HEK293 (cell line): ENCODE measurements at regions of chr7 and their contacts with region 1.

Region 1: DNA sequence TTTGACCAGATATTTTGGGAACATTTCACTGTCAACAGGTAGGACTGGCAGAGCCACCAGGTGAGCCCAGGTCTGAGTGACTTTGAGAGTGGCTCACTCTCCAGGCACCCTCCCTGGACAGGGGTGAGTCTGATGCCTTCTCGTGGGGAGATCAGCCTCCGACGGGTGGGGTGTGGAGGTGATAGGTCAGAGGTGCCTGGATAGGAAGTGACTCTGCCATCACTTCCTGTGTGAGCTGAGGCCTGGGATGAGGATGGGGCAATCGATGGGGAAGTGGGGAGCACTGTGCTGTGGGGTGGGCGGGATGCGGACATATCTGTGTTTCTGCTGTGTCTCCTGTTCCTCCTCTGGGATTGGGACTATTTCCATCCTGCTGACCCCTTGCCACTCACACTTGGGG is 34.6 kb downstream of the IFT22 start:
- H3K4me3 ChIP-seq: no peak overlapping the region
- H3K27ac ChIP-seq: no peak overlapping the region
- H3K4me1 ChIP-seq: no peaks in the 10 kb centered on the region
- CTCF ChIP-seq: no peak

Region 2: GRCh38 chr7:101244375-101245146 is 42.5 kb before region 1 on chr7 and contains the start of gene FIS1:
- CTCF ChIA-PET with region 1: interaction called, 33 read pairs
- POLR2A ChIA-PET with region 1: interaction called, 6 read pairs
- H3K4me3 ChIP-seq: peak within 1 kb of the TSS; percentile 73
- H3K27ac ChIP-seq: peak within 1 kb of the TSS; percentile 53
- H3K4me1 ChIP-seq: peaks cover 2% of the 10 kb centered on the region; the same call in 1 of the 2 replicates
- CTCF ChIP-seq: peak; percentile 93

Region 3: DNA sequence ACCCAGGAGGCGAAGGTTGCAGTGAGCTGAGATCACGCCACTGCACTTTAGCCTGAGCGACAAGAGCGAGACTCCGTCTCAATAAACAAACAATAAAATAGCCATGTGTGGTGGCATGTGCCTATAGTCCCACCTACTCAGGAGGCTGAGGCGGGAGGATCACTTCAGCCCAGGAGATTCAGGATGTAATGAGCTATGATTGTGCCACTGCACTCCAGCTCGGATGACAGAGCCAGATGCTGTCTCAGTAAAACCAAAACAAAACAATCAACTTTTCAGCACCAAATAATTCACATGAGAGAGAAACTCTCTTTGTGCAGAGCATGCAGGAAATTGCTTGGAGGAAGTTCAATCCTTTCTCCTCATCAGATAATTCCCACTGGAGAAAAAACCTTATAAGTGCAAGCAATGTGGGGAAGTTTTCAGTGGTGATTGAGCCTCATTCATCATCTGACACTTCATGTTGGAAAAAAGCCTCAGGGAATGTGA is 28.7 kb before region 1 on chr7:
- CTCF ChIA-PET with region 1: interaction called, 14 read pairs
- POLR2A ChIA-PET with region 1: no interaction called
- H3K4me3 ChIP-seq: no peak overlapping the region
- H3K27ac ChIP-seq: no peak overlapping the region
- H3K4me1 ChIP-seq: no peaks in the 10 kb centered on the region
- CTCF ChIP-seq: no peak

Region 4: GRCh38 chr7:101299511-101300464 is 12.8 kb after region 1 on chr7:
- CTCF ChIA-PET with region 1: interaction called, 10 read pairs
- POLR2A ChIA-PET with region 1: no interaction called
- H3K4me3 ChIP-seq: no peak overlapping the region
- H3K27ac ChIP-seq: no peak overlapping the region
- H3K4me1 ChIP-seq: no peaks in the 10 kb centered on the region
- CTCF ChIP-seq: no peak

Region 5: DNA sequence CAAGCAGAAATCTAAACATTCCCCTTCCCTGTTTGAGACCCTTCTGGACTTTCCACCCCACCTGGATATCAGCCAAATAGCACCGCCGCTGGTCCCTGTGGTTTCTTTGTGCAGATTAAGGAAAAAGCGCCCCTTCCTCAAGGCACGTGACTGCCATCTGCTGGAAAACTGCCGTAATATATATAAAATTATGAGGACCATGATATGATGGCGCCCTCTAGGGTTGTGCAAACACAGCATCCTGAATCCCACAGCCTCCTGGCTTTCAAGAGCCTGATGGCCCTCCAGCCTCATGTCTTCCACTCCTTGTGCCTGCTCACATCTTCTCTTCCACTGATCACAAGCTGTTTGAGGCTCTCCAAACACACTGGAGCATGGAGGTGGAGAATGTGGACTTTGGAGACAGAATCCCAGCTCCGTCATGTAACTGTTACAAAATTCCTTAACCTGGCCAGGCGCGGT is 220.8 kb after region 1 on chr7:
- CTCF ChIA-PET with region 1: interaction called, 10 read pairs
- POLR2A ChIA-PET with region 1: no interaction called
- H3K4me3 ChIP-seq: no peak overlapping the region
- H3K27ac ChIP-seq: no peak overlapping the region
- H3K4me1 ChIP-seq: no peaks in the 10 kb centered on the region
- CTCF ChIP-seq: peak; percentile 94